ENCODE measurements at regions of chr19 and their contacts with region 1.

Region 1: DNA sequence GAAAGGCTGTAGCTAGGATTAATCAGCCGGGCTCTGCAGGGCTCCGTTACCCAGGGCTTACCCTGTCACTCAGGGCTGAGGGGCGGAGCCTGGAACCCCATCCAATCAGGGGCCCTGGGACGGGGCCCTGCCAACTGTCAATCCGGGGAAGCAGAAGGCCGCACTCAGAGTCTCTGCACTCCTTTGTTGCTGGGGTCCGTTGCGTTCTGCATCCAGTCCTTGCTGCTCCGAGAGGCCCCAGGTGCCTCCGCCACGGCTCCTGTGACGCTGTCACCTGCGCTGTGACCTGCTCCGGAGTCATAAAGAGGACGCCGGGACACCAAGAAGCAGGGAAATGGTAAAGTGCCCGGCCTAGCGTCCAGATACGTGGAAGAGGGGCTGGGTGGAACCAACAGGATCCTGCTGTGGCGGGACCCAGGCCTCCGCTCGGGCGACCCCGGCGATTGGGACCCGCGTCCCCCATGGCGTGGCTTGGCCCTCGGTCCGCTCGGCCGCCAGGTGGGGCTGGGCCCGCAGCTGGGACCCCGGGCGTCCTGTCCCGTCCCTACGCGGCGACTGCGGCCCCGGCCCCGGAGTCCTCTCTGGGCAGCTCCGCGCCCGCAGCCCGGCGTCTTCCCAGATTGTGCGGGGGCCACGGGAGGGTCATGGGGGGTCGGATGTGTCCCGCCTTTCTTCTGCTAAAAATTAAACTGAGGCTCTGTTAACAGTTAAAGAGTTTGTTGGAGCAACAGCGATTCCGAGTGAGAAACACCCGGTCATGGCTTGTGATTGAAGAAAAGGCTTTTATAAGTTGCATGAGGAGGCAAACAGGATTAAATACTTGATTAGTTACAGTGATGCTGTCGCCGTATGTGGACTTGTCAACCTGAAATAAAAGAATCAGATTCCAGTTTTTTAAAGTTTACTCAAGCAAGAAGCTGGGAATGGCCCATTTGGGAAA is at the start of gene ZNF491:
- DNase-seq: peak; percentile 91 to 97 (median 96)
- H3K4me3 ChIP-seq: peak within 1 kb of the TSS; percentile 48 to 95 (median 86)
- H3K27ac ChIP-seq: peak within 1 kb of the TSS; percentile 59 to 92
- H3K4me1 ChIP-seq: peaks cover 2 to 21% (median 13%) of the 10 kb centered on the region in 4 experiments
- H3K27me3 ChIP-seq: no peaks in the 10 kb centered on the region

Region 2: GRCh38 chr19:11453468-11454341 is 345.0 kb before region 1 on chr19:
- CTCF ChIA-PET with region 1: no interaction called
- POLR2A ChIA-PET with region 1: no interaction called
- DNase-seq: peak; percentile 38 to 60 (median 59)
- H3K4me3 ChIP-seq: no peak overlapping the region
- H3K27ac ChIP-seq: no peak overlapping the region
- H3K4me1 ChIP-seq: peaks cover 0 to 3% (median 2%) of the 10 kb centered on the region in 4 experiments
- H3K27me3 ChIP-seq: peaks cover 0 to 2% (median 0%) of the 10 kb centered on the region in 5 experiments

Region 3: DNA sequence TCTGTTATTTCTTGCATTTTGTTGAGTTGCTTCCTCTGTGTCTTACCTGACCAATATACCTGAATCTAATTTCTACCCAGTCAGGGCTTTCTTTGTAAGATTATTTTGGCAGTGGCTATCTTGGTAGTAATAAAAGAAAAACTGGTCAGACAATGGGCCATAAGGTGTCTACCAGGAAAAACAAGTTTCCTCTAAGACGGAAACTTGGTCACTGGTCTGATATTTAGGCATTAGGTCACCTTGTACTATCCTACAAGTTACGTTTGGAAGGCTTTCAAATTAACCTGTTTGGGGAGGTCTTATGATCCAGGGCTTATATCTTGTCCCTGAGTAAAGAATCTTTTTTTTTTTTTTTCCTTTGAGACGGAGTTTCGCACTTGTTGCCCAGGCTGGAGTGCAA is 69.1 kb before region 1 on chr19:
- CTCF ChIA-PET with region 1: no interaction called
- POLR2A ChIA-PET with region 1: no interaction called
- DNase-seq: no peak
- H3K4me3 ChIP-seq: no peak overlapping the region
- H3K27ac ChIP-seq: no peak overlapping the region
- H3K4me1 ChIP-seq: no peaks in the 10 kb centered on the region
- H3K27me3 ChIP-seq: no peaks in the 10 kb centered on the region

Region 4: GRCh38 chr19:11749754-11750153 is 48.9 kb before region 1 on chr19:
- CTCF ChIA-PET with region 1: no interaction called
- POLR2A ChIA-PET with region 1: no interaction called
- DNase-seq: no peak
- H3K4me3 ChIP-seq: no peak overlapping the region
- H3K27ac ChIP-seq: no peak overlapping the region
- H3K4me1 ChIP-seq: no peaks in the 10 kb centered on the region
- H3K27me3 ChIP-seq: no peaks in the 10 kb centered on the region

Region 5: DNA sequence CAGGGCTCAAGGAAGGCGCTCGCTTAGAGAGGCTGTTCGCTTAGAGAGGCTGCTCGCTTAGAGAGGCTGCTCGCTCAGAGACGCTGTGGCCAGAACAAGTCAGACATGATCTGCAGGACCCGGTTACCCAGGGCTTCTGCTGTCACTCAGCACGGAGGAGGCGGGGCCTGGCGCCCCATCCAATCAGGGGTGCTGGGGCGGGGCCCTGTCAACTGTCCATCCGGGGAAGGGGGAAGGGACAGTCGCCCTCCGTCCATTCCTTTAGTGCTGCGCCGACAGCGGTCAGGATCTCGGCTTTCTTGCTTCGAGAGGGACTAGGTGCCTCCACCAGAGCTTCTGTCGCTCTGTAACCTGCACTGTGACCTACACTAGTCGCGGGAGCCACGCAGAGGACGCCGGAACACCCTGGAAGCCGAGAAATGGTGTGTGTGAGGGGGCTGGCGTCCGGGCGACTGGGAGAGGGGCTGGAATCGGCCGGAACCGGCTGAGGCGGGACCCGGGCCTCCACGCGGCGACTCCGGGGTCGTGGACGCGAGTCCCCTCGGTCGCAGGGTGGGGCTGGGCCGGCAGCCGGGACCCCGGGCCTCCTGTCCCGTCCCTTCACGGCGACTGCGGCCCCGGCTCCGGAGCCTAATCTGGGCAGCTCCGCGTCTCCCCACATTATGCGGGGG is 15.5 kb after region 1 on chr19 and contains the start of gene ZNF440:
- CTCF ChIA-PET with region 1: interaction called, 33 read pairs
- POLR2A ChIA-PET with region 1: interaction called, 6 read pairs
- DNase-seq: peak; percentile 78 to 91 (median 89)
- H3K4me3 ChIP-seq: peak within 1 kb of the TSS; percentile 89 to 100 (median 96)
- H3K27ac ChIP-seq: peak within 1 kb of the TSS; percentile 59 to 89
- H3K4me1 ChIP-seq: peaks cover 0 to 17% (median 10%) of the 10 kb centered on the region in 4 experiments
- H3K27me3 ChIP-seq: no peaks in the 10 kb centered on the region

Region 6: DNA sequence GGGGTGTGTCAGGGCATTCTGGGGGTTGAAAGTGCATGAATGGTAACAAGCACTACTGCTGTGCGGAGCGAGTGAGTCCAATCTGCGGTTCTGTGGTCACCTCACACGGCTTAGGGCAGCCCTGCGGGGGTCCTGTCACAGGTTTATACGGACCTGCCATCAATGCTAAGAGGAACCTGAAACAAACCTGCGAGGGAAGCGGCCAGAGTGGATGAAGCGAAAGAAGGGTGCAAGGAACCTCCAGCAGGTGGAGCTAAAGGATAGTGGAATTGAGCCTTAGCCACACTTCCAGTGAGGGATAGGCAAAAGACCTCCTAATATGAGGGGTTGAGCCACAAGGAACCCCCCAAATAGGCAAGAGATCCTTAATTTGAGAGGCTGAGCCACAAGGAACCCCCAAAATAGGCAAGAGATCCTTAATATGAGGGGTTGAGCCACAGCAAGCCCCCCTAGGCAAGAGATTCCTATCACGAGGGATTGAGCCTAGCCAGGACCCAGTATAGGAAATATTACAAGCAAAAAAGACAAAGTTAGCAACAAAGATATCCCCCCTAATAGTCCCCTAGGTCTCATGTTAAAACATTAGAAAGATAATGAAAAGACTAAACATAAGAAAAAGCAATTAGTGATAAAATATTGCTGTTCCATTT is 82.6 kb after region 1 on chr19:
- CTCF ChIA-PET with region 1: interaction called, 22 read pairs
- POLR2A ChIA-PET with region 1: no interaction called
- DNase-seq: peak; percentile 76 to 88 (median 83)
- H3K4me3 ChIP-seq: peak overlapping the region in 1 of 7 experiments; percentile 38
- H3K27ac ChIP-seq: no peak overlapping the region
- H3K4me1 ChIP-seq: peaks cover 0 to 21% (median 9%) of the 10 kb centered on the region in 4 experiments
- H3K27me3 ChIP-seq: no peaks in the 10 kb centered on the region

Region 7: GRCh38 chr19:11924886-11925650 is 126.4 kb after region 1 on chr19 and contains the start of gene ZNF700:
- CTCF ChIA-PET with region 1: interaction called, 11 read pairs
- POLR2A ChIA-PET with region 1: interaction called, 4 read pairs
- DNase-seq: peak; percentile 92 to 95 (median 95)
- H3K4me3 ChIP-seq: peak within 1 kb of the TSS; percentile 84 to 98 (median 91)
- H3K27ac ChIP-seq: peak within 1 kb of the TSS; percentile 83 to 92
- H3K4me1 ChIP-seq: peaks cover 7 to 33% (median 32%) of the 10 kb centered on the region in 4 experiments
- H3K27me3 ChIP-seq: no peaks in the 10 kb centered on the region

Region 8: DNA sequence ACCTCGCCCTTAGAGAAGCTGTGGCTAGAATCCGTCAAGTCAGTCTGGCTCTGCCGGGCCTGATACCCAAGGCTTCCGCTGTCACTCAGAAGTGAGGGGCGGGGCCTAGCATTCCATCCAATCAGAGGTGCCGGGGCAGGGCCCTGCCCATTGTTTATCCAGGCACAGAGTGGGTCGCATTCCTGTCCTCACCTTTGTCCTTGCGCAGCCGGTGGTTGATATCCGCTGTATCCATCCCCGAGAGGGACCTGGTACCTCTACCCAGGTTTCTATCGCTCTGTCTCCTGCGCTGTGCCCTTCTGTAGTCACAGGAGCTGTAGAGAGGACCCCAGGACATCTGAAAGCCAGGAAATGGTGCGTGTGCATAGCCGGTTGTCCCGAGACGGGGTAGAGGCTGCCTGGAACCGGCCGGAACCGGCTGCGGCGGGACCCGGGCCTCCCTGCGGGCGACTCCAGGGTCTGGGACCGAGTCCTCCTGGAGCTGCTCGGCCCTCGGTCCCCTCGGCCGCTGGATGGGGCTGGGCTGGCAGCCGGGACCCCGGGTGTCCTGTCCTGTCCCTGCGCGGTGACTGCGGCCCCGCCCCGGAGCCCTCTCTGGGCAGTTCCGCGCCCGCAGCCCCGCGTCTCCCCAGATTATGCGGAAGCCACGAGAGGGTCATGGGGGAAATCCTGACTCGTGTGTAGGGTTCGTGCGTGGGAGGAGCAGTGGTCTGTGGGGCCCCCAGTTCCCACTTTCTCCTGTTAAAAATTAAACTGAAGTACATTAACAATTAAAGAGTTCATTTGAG is 166.4 kb after region 1 on chr19 and contains the start of gene ZNF763:
- CTCF ChIA-PET with region 1: interaction called, 17 read pairs
- POLR2A ChIA-PET with region 1: no interaction called
- DNase-seq: peak; percentile 91 to 96 (median 96)
- H3K4me3 ChIP-seq: peak within 1 kb of the TSS; percentile 73 to 100 (median 94)
- H3K27ac ChIP-seq: peak within 1 kb of the TSS; percentile 83 to 91
- H3K4me1 ChIP-seq: peaks cover 0 to 22% (median 18%) of the 10 kb centered on the region in 4 experiments
- H3K27me3 ChIP-seq: no peaks in the 10 kb centered on the region

Region 9: DNA sequence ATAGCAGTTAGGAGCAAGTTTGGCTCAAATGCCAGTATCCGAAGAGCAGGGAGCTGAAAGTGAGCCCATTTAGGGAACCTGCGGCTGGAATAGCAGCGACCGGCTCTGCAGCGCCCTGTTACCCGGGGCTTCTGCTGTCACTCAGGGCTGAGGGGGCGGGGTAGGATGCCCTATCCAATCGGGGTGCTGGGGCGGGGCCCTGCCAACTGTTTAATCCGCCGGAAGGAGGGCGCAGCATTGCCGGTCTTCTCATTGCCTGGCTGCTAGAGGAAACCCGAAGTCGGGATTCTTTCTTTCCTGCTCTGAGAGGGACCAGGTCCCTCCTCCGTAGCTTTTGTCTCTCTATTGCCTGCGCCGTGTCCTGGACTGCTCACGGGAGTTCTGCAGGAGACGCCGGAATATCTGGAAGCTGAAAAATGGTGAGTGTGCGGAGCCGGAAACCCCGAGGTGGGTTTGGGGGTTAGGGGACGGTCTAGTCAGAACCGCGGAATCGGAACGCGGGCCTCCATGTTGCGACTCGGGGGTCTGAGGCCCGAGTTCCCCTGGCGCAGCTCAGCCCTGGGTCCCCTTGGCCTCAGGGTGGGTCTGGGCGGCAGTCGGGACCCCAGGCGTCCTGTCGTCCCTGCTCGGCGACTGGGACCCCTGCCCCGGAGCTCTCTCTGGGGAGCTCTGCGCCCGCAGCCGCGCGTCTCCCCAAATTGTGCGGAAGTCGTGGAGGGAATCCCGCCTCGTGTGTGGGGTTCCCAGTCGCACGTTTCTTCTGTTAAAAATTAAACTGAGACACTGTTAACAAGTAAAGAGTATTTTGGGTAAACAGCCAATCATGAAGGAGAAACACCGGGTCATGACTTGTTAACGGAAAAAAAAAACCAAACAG is 189.0 kb after region 1 on chr19:
- CTCF ChIA-PET with region 1: interaction called, 26 read pairs
- POLR2A ChIA-PET with region 1: interaction called, 3 read pairs
- DNase-seq: peak; percentile 95 to 99 (median 98)
- H3K4me3 ChIP-seq: peak overlapping the region; percentile 92 to 99 (median 98)
- H3K27ac ChIP-seq: peak overlapping the region; percentile 91 to 94
- H3K4me1 ChIP-seq: peaks cover 0 to 13% (median 12%) of the 10 kb centered on the region in 4 experiments
- H3K27me3 ChIP-seq: no peaks in the 10 kb centered on the region

Region 10: GRCh38 chr19:12139885-12140547 is 341.4 kb after region 1 on chr19 and contains the start of gene ZNF20:
- CTCF ChIA-PET with region 1: interaction called, 13 read pairs
- POLR2A ChIA-PET with region 1: no interaction called
- DNase-seq: peak; percentile 91 to 94 (median 93)
- H3K4me3 ChIP-seq: peak within 1 kb of the TSS; percentile 68 to 95 (median 93)
- H3K27ac ChIP-seq: peak within 1 kb of the TSS; percentile 61 to 84
- H3K4me1 ChIP-seq: peaks cover 11 to 30% (median 15%) of the 10 kb centered on the region in 4 experiments
- H3K27me3 ChIP-seq: no peaks in the 10 kb centered on the region

Measured in common myeloid progenitor, CD34-positive (primary cell).